Activated T-helper 2 cell treated with anti-CD3 and anti-CD28 coated beads, Interferon-gamma antibody, Interleukin-2, Interleukin-4, amounts not matched to agents 10 μg/mL and 5 μg/mL and 100 μg/mL, durations not matched to agents 14 hours and 24 hours and 36 hours (primary cell): ENCODE measurements at regions of chr4 and their contacts with region 1.

Region 1: GRCh38 chr4:6709230-6710114 is at the start of gene MRFAP1L1:
- DNase-seq: peak; percentile 94
- H3K4me3 Mint-ChIP-seq: peak within 1 kb of the TSS; percentile 94
- H3K27ac Mint-ChIP-seq: peak within 1 kb of the TSS; percentile 95
- H3K4me1 Mint-ChIP-seq: peaks cover 51% of the 10 kb centered on the region
- H3K27me3 Mint-ChIP-seq: peaks cover 2% of the 10 kb centered on the region
- total RNA-seq, gene MRFAP1L1: 46.6 and 49.6 TPM in 2 replicates

Region 2: DNA sequence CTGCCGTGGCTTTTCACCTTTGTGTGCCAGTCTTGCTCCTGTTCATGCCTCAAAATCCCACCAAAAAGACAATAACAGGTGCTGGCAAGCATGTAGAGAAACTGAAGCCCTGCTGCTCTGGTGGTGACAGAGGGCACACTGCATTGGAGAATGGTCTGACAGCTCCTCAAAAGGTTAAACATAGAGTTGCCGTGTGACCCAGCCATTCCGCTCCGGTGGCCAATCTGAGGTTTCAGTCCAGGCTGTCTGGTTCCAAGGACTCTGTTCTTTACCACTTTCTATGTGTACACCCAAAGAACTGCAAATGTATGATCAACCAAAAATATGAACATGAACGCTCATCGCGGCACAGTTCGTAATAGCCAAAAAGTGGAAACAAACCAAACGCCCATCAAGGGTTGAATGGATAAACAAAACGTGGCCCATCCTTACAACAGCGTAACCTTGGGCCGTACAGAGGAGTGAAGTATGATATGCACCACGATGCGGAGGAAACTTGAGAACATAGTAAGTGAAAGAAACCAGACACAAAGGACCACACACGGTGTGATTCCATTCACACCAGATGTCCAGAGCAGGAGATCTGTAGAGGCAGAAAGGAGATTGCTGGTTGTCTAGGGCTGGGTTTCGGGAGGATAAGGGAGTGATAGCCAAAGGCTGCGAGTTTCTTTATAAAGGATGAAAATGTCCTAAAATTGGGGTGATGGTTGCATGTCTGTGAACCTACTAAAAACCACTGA is 473.4 kb before region 1 on chr4:
- intact Hi-C with region 1: no loop called
- DNase-seq: no peak
- H3K4me3 Mint-ChIP-seq: no peak overlapping the region
- H3K27ac Mint-ChIP-seq: no peak overlapping the region
- H3K4me1 Mint-ChIP-seq: no peaks in the 10 kb centered on the region
- H3K27me3 Mint-ChIP-seq: peaks cover 3% of the 10 kb centered on the region

Region 3: DNA sequence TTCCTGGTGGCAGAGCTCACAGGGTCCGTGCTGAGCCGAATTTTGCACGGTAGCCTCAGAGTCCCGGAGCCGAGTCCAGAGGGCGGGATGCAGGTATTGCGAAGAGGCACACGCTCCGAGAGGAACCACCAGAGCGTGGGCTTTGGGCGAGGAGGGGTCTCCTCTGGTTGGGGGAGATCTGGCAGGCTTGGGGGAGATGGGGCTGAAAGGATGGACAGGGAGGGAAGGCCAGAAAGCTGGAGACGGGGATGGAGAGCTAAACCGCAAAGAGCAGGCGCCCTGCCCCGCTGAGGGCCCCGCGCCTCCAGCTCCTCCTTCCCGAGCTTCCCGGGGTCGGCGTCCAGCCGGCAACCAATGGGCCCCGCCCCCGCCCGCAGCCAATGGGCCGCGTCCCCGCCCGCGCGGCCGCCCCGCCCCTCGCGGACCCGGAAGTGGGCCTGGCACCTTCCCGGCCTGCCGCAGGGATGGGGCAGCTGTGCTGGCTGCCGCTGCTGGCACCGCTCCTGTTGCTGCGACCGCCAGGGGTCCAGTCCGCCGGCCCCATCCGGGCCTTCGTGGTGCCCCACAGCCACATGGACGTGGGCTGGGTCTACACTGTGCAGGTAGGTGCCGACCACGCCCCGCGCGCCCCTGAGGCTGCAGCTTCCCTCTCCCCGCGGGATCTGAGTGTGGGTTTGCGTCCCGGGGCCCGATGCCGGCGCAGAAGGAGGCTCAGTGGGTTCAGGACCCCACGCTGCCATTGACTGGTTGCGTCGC is 134.5 kb before region 1 on chr4 and contains the start of gene MAN2B2:
- intact Hi-C with region 1: loop called (anchors 10 kb)
- DNase-seq: peak; percentile 78
- H3K4me3 Mint-ChIP-seq: peak within 1 kb of the TSS; percentile 84
- H3K27ac Mint-ChIP-seq: peak within 1 kb of the TSS; percentile 79
- H3K4me1 Mint-ChIP-seq: peaks cover 6% of the 10 kb centered on the region
- H3K27me3 Mint-ChIP-seq: peaks cover 6% of the 10 kb centered on the region
- total RNA-seq, gene MAN2B2: 14.9 and 16.3 TPM in 2 replicates

Region 4: DNA sequence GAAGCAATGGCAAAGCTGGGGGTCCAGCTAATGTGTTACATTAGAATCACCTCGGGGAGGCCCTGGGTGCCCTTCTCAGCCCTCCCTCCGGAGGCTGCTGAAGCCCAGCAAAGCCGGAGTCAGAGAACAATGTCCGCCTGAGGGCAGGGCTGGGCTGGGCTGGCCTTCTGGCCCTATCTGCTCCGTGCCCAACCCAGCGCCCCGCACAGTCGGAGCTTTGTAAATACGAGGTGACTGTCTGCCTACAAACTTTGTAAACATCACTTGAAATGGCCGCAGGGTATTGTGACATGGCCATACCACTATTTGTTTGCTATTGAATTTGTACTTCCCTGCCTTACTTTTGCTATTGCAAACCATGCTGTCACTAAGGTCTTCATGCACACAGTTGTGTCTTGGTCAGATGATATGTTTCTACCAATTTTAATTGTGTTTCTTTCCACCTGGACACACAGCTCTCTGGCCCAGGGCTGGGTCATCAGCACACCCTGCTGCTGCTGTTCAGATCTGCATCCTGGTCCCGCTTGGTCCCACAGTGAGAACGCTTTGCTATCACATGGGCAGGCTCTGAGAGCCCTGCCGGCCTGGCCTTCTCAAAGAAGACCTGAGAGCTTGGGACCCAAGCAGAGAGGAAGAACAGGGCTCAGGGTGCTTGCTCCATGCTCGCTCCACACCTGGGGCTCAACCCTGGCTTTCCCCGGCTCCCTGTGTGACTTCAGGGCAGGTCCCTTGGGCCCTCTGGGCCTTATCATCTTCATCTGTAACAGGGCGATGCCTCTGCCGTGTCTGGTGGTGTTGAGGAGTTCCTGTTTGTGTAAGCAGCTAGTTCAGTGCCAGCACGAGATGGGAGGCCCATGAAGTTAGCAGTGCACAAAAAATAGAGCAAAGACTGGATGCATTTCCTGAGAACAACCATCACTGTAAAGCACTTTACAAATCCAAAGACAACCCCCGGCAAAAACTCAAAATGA is 13.5 kb before region 1 on chr4:
- intact Hi-C with region 1: loop called (anchors 1 kb)
- DNase-seq: peak; percentile 66
- H3K4me3 Mint-ChIP-seq: peak overlapping the region; percentile 61
- H3K27ac Mint-ChIP-seq: peak overlapping the region; percentile 97
- H3K4me1 Mint-ChIP-seq: peaks cover 72% of the 10 kb centered on the region
- H3K27me3 Mint-ChIP-seq: no peaks in the 10 kb centered on the region

Region 5: GRCh38 chr4:6783053-6783981 is 73.8 kb after region 1 on chr4:
- intact Hi-C with region 1: loop called (anchors 1 kb)
- DNase-seq: peak; percentile 86
- H3K4me3 Mint-ChIP-seq: peak overlapping the region; percentile 79
- H3K27ac Mint-ChIP-seq: peak overlapping the region; percentile 75
- H3K4me1 Mint-ChIP-seq: peaks cover 55% of the 10 kb centered on the region
- H3K27me3 Mint-ChIP-seq: no peaks in the 10 kb centered on the region